Left ventricle myocardium superior (tissue), 1 donor: ENCODE measurements at regions of chr4 and their contacts with region 1.

Region 1: DNA sequence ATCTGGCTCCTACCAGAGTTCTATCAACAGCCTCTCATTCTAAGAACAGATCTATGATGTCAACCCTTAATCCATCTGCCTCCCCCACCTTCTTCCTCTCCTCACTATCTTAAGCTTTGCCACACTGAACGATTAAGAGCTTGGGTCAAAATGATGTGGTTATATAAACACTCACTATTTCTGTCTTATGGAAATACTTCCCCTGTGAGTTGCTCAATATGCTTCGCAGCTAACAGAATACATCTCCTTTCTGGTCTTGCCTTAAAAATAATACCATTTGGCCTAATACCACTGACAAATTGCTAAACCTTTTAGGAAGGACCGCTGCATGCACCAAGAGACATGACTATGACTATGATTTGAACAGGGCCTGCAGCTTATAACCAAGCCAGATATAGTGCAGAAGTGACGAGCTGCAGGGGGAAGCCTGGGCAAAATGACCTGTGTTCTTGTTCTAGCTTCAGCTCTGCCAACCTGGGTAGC is 130.9 kb downstream of the RNF150 start:
- DNase-seq: no peak
- ATAC-seq: peak; percentile 92

Region 2: GRCh38 chr4:141121768-141122454 is 119.5 kb after region 1 on chr4:
- intact Hi-C with region 1: loop called (anchors 10 kb)
- DNase-seq: no peak
- ATAC-seq: no peak

Region 3: DNA sequence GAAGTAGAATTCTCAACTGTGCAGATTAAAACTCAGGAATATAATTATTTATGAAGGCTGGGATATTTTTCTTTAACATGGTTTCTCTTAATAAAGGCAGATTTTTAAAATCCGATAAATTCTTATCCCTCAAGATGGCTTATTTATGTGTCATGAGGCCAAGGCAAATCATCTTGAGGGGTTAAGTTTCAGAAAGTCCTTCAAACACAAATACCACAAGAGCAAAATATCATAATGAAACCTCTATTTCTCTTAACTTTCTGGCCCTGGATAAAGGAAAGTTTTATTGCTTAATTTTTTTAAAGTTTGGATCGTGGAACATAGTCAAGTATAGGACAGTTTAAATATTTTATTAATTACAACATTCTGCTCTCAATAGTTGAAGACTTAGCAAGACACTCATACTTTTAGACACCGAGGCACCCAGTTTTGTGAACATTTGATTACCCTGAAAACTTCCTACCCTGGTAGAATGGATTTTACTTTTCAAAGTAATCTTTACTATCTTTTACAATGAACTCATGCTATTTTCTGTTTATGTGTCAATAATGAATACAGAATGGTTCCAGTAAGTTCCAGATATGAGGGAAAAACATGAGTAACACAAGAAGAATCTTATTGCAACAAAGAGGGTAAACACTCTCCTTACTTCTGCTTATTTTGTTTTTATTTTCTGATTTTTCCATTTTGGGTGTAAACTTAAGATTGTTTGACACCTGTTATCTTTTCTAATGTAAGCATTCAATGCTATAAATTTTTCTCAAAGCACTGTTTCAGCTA is 433.3 kb after region 1 on chr4:
- intact Hi-C with region 1: no loop called
- DNase-seq: no peak
- ATAC-seq: no peak